ENCODE measurements at regions of chr9 and their contacts with region 1.

Region 1: GRCh38 chr9:136267261-136268111 is 21.9 kb upstream of the QSOX2 start:
- DNase-seq: peak; percentile 90
- ATAC-seq: peak; percentile 98
- H3K4me3 ChIP-seq: peak overlapping the region in 4 of 5 experiments; percentile 55 to 69 (median 62)
- H3K4me3 Mint-ChIP-seq: peak overlapping the region; percentile 85
- H3K27ac ChIP-seq: peak overlapping the region; percentile 50 to 66
- H3K27ac Mint-ChIP-seq: peak overlapping the region; percentile 84
- H3K4me1 ChIP-seq: peaks cover 7 to 16% of the 10 kb centered on the region in 2 donors
- H3K4me1 Mint-ChIP-seq: peaks cover 11% of the 10 kb centered on the region
- H3K27me3 ChIP-seq: no peaks in the 10 kb centered on the region
- H3K27me3 Mint-ChIP-seq: peaks cover 3% of the 10 kb centered on the region
- CTCF ChIP-seq: peak; percentile 38

Region 2: GRCh38 chr9:136170006-136170901 is 97.2 kb before region 1 on chr9:
- CTCF ChIA-PET with region 1: interaction called, 51 read pairs
- POLR2A ChIA-PET with region 1: interaction called, 4 read pairs
- intact Hi-C with region 1: loop called (anchors 1 kb)
- DNase-seq: peak; percentile 80
- ATAC-seq: peak; percentile 97
- H3K4me3 ChIP-seq: no peak overlapping the region
- H3K4me3 Mint-ChIP-seq: no peak overlapping the region
- H3K27ac ChIP-seq: no peak overlapping the region
- H3K27ac Mint-ChIP-seq: peak overlapping the region; percentile 68
- H3K4me1 ChIP-seq: peaks cover 0 to 15% of the 10 kb centered on the region in 2 donors
- H3K4me1 Mint-ChIP-seq: peaks cover 11% of the 10 kb centered on the region
- H3K27me3 ChIP-seq: peaks cover 0 to 35% (median 4%) of the 10 kb centered on the region in 4 experiments
- H3K27me3 Mint-ChIP-seq: peaks cover 21% of the 10 kb centered on the region
- CTCF ChIP-seq: peak; percentile 85

Region 3: GRCh38 chr9:136245219-136246150 is 22.0 kb before region 1 on chr9 and contains the start of gene QSOX2:
- CTCF ChIA-PET with region 1: interaction called, 13 read pairs
- POLR2A ChIA-PET with region 1: interaction called, 4 read pairs
- intact Hi-C with region 1: loop called (anchors 1 kb)
- DNase-seq: peak; percentile 91
- ATAC-seq: peak; percentile 71
- H3K4me3 ChIP-seq: peak within 1 kb of the TSS; percentile 66 to 97 (median 90)
- H3K4me3 Mint-ChIP-seq: peak within 1 kb of the TSS; percentile 94
- H3K27ac ChIP-seq: peak within 1 kb of the TSS; percentile 70 to 83
- H3K27ac Mint-ChIP-seq: peak within 1 kb of the TSS; percentile 90
- H3K4me1 ChIP-seq: peaks cover 46 to 51% of the 10 kb centered on the region in 2 donors
- H3K4me1 Mint-ChIP-seq: peaks cover 50% of the 10 kb centered on the region
- H3K27me3 ChIP-seq: no peaks in the 10 kb centered on the region
- H3K27me3 Mint-ChIP-seq: no peaks in the 10 kb centered on the region
- CTCF ChIP-seq: no peak
- total RNA-seq, gene QSOX2: 139 and 141 TPM in 2 replicates